ENCODE measurements at regions of chr3 and their contacts with region 1.

Region 1: GRCh38 chr3:110314512-110315114 is 757.0 kb upstream of the NECTIN3 start:
- DNase-seq: peak; percentile 27
- CTCF ChIP-seq: peak; percentile 83

Region 2: GRCh38 chr3:110093812-110094401 is 220.7 kb before region 1 on chr3:
- CTCF ChIA-PET with region 1: no interaction called
- POLR2A ChIA-PET with region 1: no interaction called
- DNase-seq: no peak
- CTCF ChIP-seq: no peak

Region 3: GRCh38 chr3:110243081-110243480 is 71.5 kb before region 1 on chr3:
- CTCF ChIA-PET with region 1: no interaction called
- POLR2A ChIA-PET with region 1: no interaction called
- DNase-seq: no peak
- CTCF ChIP-seq: no peak

Region 4: DNA sequence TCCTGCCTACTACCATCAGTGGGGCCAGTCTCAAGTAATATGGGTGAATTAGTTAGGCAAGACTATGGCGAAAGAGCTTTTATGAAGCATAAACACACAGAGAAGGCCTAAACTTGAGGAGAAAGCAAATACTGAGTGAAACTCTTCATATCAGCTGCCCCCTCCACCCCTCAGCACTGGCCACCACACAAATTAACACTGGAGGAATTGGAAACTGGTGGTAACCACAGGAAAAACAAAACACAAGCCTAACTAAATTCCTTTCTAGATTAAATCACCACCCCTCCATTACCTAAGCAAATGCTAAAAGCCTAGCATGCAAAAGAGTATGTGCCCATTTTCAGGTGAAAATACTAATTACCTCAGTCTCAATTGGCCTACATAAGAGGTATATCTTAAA is 17.7 kb before region 1 on chr3:
- CTCF ChIA-PET with region 1: interaction called, 13 read pairs
- POLR2A ChIA-PET with region 1: no interaction called
- DNase-seq: no peak
- CTCF ChIP-seq: no peak

Region 5: DNA sequence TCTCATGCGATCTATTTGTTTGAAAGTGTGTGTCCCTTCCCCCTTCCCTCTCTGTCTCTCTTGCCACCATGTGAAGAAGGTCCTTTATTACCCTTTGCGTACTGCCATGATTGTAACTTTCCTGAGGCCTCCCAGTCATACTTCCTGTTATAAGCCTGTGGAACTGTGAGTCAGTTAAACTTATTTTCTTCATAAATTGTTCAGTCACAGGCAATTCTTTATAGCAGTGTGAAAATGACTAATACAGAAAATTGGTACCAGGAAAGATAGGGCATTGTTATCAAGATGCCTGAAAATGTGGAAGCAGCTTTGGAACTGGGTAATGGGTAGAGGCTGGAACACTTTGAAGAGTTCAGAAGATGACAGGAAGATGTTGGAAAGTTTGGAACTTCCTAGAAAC is 13.3 kb after region 1 on chr3:
- CTCF ChIA-PET with region 1: interaction called, 45 read pairs
- POLR2A ChIA-PET with region 1: no interaction called
- DNase-seq: no peak
- CTCF ChIP-seq: no peak